Endothelial cell of umbilical vein (primary cell): ENCODE measurements at regions of chr3 and their contacts with region 1.

Region 1: GRCh38 chr3:153768561-153769469 is 352.4 kb upstream of the ARHGEF26 start:
- DNase-seq: peak; percentile 57
- H3K4me3 ChIP-seq: no peak overlapping the region
- H3K27ac ChIP-seq: no peak overlapping the region
- H3K4me1 ChIP-seq: no peaks in the 10 kb centered on the region
- H3K27me3 ChIP-seq: no peaks in the 10 kb centered on the region
- CTCF ChIP-seq: peak; percentile 78
- POLR2A ChIP-seq: no peak

Region 2: GRCh38 chr3:153043729-153044328 is 725.0 kb before region 1 on chr3:
- CTCF ChIA-PET with region 1: interaction called, 9 read pairs
- POLR2A ChIA-PET with region 1: no interaction called
- dilution Hi-C with region 1: no loop called
- intact Hi-C with region 1: loop called (anchors 1 kb)
- DNase-seq: peak; percentile 43
- H3K4me3 ChIP-seq: peak overlapping the region in 2 of 3 experiments; percentile 4 to 11
- H3K27ac ChIP-seq: peak overlapping the region; percentile 68
- H3K4me1 ChIP-seq: peaks cover 12% of the 10 kb centered on the region
- H3K27me3 ChIP-seq: no peaks in the 10 kb centered on the region
- CTCF ChIP-seq: no peak
- POLR2A ChIP-seq: no peak

Region 3: DNA sequence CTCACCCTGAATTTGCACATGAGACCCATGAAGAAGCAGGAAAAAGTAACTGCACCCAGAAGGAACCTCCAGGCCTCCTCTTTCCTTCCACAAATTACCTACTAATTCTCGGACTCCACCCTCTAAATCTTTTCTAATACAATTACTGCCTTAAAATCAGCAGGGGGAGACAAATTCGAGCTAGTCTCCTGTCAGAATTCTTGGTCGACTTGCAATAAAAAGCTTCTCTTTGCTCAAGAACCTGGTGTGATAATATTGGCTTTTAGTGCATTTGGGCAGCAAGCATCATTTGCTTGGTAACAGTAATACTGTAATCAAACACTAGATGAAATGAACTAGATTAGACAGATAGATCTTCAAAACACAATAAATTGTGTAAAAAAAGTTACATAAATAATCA is 324.9 kb before region 1 on chr3:
- CTCF ChIA-PET with region 1: interaction called, 11 read pairs
- POLR2A ChIA-PET with region 1: no interaction called
- dilution Hi-C with region 1: no loop called
- intact Hi-C with region 1: loop called (anchors 2 kb)
- DNase-seq: peak; percentile 18
- H3K4me3 ChIP-seq: no peak overlapping the region
- H3K27ac ChIP-seq: no peak overlapping the region
- H3K4me1 ChIP-seq: no peaks in the 10 kb centered on the region
- H3K27me3 ChIP-seq: no peaks in the 10 kb centered on the region
- CTCF ChIP-seq: peak; percentile 1 to 6
- POLR2A ChIP-seq: no peak

Region 4: GRCh38 chr3:153595186-153595815 is 173.5 kb before region 1 on chr3:
- CTCF ChIA-PET with region 1: interaction called, 5 read pairs
- POLR2A ChIA-PET with region 1: no interaction called
- dilution Hi-C with region 1: no loop called
- intact Hi-C with region 1: loop called (anchors 1 kb)
- DNase-seq: peak; percentile 66
- H3K4me3 ChIP-seq: no peak overlapping the region
- H3K27ac ChIP-seq: no peak overlapping the region
- H3K4me1 ChIP-seq: peaks cover 15% of the 10 kb centered on the region
- H3K27me3 ChIP-seq: no peaks in the 10 kb centered on the region
- CTCF ChIP-seq: peak; percentile 35 to 62
- POLR2A ChIP-seq: no peak

Region 5: GRCh38 chr3:153756816-153757215 is 12.0 kb before region 1 on chr3:
- CTCF ChIA-PET with region 1: interaction called, 13 read pairs
- POLR2A ChIA-PET with region 1: no interaction called
- dilution Hi-C with region 1: no loop called
- intact Hi-C with region 1: no loop called
- DNase-seq: no peak
- H3K4me3 ChIP-seq: no peak overlapping the region
- H3K27ac ChIP-seq: no peak overlapping the region
- H3K4me1 ChIP-seq: no peaks in the 10 kb centered on the region
- H3K27me3 ChIP-seq: no peaks in the 10 kb centered on the region
- CTCF ChIP-seq: no peak
- POLR2A ChIP-seq: no peak

Region 6: GRCh38 chr3:154018100-154018696 is 249.4 kb after region 1 on chr3:
- CTCF ChIA-PET with region 1: no interaction called
- POLR2A ChIA-PET with region 1: no interaction called
- dilution Hi-C with region 1: no loop called
- intact Hi-C with region 1: loop called (anchors 1 kb)
- DNase-seq: peak; percentile 23
- H3K4me3 ChIP-seq: no peak overlapping the region
- H3K27ac ChIP-seq: no peak overlapping the region
- H3K4me1 ChIP-seq: no peaks in the 10 kb centered on the region
- H3K27me3 ChIP-seq: peaks cover 1 to 2% of the 10 kb centered on the region in 2 experiments
- CTCF ChIP-seq: peak; percentile 67
- POLR2A ChIP-seq: no peak